MCF 10A (cell line): ENCODE measurements at regions of chr6 and their contacts with region 1.

Region 1: DNA sequence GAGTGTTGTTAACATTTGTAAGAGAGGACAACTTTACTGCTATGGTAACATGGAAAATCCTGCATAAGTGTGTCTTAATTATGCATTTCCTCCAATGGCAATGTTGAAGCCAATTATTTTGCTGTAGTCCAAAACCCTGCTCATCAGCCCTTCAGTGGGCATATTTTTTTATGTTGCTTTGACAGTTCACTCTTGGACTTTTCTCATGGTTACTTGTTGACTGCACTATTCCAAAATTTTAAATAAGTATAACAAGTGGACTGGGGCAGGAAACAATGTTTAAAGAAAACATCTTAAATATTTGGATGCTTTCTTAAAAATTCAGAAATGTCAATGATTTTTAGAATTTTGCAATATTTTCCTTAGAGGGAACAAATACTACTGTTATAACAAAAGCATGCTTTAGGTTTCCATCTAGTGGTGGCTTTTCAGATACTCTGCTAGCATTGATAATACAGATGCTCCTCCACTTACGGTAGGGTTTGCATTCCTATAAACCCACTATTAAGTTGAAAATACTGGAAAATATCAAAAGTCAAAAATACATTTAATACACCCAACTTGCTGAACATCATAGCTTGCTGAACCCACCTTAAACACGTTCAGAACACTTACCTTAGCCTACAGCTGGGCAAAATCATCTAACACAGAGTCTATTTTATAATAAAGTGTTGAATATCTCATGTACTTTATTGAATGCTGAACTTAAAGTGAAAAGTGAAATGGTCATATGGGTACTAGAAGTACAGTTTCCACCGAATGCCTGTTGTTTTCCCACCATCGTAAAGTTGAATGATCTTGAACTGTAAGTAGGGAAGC is 86.4 kb downstream of the ADGRG6 start:
- DNase-seq: peak; percentile 64
- H3K4me3 Mint-ChIP-seq: no peak overlapping the region
- H3K27ac Mint-ChIP-seq: no peak overlapping the region
- H3K4me1 Mint-ChIP-seq: no peaks in the 10 kb centered on the region
- H3K27me3 Mint-ChIP-seq: no peaks in the 10 kb centered on the region
- CTCF ChIP-seq: peak; percentile 70

Region 2: DNA sequence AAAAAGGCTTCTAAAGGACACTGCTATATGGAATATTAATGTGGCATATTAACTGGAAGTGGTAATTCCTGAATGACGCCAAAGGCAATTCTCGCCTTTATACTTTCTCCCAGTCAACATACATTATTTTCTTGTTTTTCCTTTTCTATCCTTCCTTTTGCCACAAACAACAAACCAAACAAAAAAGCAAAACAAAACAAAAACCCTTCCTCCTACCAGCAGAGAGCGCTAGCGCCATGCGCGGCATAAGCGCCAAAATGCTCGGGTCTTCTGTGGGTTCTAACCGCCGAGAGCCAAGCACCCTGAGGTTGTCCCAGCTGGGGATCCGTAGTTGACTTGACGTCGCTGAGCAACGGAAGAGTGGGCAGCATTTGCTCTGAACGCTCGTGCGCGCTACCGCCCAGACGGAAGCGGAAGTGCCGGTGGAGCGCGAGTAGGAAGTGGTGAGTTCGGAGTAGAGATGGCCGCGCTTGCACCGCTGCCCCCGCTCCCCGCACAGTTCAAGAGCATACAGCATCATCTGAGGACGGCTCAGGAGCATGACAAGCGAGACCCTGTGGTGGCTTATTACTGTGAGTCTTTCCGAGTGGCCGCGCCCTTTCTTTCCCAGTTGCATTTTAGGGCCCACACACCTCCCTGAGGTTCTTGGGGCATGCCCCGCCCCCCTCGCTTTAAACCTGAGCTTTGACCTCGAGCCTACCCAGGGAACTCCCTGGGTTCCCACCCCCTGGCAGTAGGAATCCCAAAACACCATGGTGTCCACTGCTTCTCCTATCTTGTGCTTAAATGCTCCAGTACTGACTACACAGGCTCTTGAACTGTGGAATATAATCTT is 241.2 kb before region 1 on chr6 and contains the starts of genes NMBR and VTA1:
- CTCF ChIA-PET with region 1: interaction called, 30 read pairs
- POLR2A ChIA-PET with region 1: interaction called, 13 read pairs
- intact Hi-C with region 1: loop called (anchors 1 kb)
- DNase-seq: peak; percentile 98
- H3K4me3 Mint-ChIP-seq: peak within 1 kb of the TSS; percentile 97
- H3K27ac Mint-ChIP-seq: peak within 1 kb of the TSS; percentile 92
- H3K4me1 Mint-ChIP-seq: peaks cover 36% of the 10 kb centered on the region
- H3K27me3 Mint-ChIP-seq: no peaks in the 10 kb centered on the region
- CTCF ChIP-seq: peak; percentile 87
- total RNA-seq, gene NMBR: not detected in 2 replicates
- total RNA-seq, gene VTA1: 42.9 and 43.5 TPM in 2 replicates

Region 3: GRCh38 chr6:142155895-142156757 is 232.1 kb before region 1 on chr6:
- CTCF ChIA-PET with region 1: interaction called, 52 read pairs
- POLR2A ChIA-PET with region 1: interaction called, 3 read pairs
- intact Hi-C with region 1: loop called (anchors 1 kb)
- DNase-seq: peak; percentile 33
- H3K4me3 Mint-ChIP-seq: peak overlapping the region; percentile 4
- H3K27ac Mint-ChIP-seq: peak overlapping the region; percentile 59
- H3K4me1 Mint-ChIP-seq: peaks cover 6% of the 10 kb centered on the region
- H3K27me3 Mint-ChIP-seq: no peaks in the 10 kb centered on the region
- CTCF ChIP-seq: peak; percentile 46